ENCODE measurements at regions of chr2 and their contacts with region 1.

Region 1: GRCh38 chr2:187581125-187581896 is 27.1 kb upstream of the TFPI start:
- DNase-seq: peak; percentile 39
- H3K4me3 Mint-ChIP-seq: no peak overlapping the region
- H3K27ac Mint-ChIP-seq: no peak overlapping the region
- H3K4me1 Mint-ChIP-seq: peaks cover 6% of the 10 kb centered on the region
- H3K27me3 Mint-ChIP-seq: peaks cover 11% of the 10 kb centered on the region

Region 2: DNA sequence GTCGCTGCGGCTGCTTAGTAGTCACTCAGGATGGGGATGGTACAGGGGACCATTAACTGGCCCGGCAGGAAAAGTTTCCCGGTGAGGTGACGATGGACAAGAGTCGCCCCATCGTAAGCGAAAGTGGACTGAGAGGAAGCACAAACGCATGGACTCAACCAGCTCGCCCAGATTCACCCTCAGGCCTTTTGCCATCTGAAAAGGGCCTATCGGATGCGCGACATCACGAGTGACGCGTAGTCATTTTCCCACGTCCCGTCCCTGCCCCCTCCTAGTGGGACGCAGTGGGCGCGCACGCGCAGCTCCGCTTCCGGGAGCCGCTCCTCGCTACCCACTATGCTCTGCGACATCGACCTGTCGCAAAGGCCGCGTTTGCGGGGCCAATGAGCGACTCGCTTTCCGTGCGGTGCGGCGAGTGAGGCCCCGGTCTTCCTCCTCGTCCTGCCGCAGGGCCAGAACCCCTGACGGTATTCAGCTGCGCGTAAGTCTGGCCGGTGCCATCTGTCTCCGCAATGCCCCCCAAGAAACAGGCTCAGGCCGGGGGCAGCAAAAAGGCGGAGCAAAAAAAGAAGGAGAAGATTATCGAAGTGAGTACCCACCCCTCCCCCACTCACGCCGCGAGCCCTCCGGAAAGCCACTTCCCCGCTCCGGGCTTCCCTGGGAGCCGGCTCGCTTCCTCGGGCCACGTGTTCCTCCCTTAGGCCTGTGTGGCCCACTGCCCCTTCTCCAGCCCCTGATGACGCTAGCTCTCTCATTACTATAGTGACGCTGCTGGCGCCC is 1095.2 kb before region 1 on chr2 and contains the start of gene ZC3H15:
- CTCF ChIA-PET with region 1: no interaction called
- intact Hi-C with region 1: loop called (anchors 10 kb)
- DNase-seq: peak; percentile 96
- H3K4me3 Mint-ChIP-seq: peak within 1 kb of the TSS; percentile 98
- H3K27ac Mint-ChIP-seq: peak within 1 kb of the TSS; percentile 98
- H3K4me1 Mint-ChIP-seq: peaks cover 60% of the 10 kb centered on the region
- H3K27me3 Mint-ChIP-seq: no peaks in the 10 kb centered on the region
- total RNA-seq, gene ZC3H15: 92.2 to 93.3 TPM

Region 3: GRCh38 chr2:187453078-187453641 is 128.2 kb before region 1 on chr2:
- CTCF ChIA-PET with region 1: no interaction called
- intact Hi-C with region 1: loop called (anchors 1 kb)
- DNase-seq: no peak
- H3K4me3 Mint-ChIP-seq: no peak overlapping the region
- H3K27ac Mint-ChIP-seq: no peak overlapping the region
- H3K4me1 Mint-ChIP-seq: peaks cover 3% of the 10 kb centered on the region
- H3K27me3 Mint-ChIP-seq: no peaks in the 10 kb centered on the region

Region 4: DNA sequence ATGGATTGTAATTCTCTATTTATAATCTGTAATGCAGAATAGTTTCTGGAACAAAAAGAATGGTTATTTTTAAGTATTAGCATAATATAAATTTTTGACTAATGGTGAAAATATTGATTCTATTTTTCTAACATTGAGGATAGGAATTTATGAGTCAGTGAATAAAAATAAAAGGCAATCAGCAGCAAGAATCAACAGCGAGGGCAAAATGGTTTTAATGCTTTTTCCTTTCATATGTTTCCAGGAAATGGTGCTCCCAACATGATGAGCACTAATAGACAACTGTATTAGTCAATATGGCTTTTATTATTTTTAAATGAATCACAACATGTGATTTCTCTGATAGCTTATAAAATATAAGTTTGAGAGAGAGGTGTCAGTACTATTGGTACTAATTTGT is 63.7 kb after region 1 on chr2:
- CTCF ChIA-PET with region 1: no interaction called
- intact Hi-C with region 1: no loop called
- DNase-seq: no peak
- H3K4me3 Mint-ChIP-seq: no peak overlapping the region
- H3K27ac Mint-ChIP-seq: no peak overlapping the region
- H3K4me1 Mint-ChIP-seq: no peaks in the 10 kb centered on the region
- H3K27me3 Mint-ChIP-seq: no peaks in the 10 kb centered on the region

Region 5: GRCh38 chr2:187842978-187843847 is 261.9 kb after region 1 on chr2:
- CTCF ChIA-PET with region 1: interaction called, 7 read pairs
- intact Hi-C with region 1: loop called (anchors 1 kb)
- DNase-seq: no peak
- H3K4me3 Mint-ChIP-seq: no peak overlapping the region
- H3K27ac Mint-ChIP-seq: no peak overlapping the region
- H3K4me1 Mint-ChIP-seq: no peaks in the 10 kb centered on the region
- H3K27me3 Mint-ChIP-seq: no peaks in the 10 kb centered on the region

Region 6: DNA sequence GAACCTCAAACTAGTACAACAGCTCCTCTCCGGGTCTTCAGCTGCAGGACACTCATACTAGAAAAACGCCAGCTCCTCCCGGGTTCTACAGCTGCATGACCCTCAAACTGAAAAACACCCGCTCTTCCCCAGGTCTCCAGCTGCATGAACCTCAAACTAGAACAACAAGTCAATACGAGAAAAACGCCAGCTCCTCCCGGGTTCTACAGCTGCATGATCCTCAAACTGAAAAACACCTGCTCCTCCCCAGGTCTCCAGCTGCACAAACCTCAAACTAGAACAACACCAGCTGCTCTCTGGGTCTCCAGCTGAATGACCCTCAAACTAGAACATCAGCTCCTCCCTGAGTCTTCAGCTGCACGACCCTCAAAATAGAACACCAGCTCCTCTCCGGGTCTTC is 287.9 kb after region 1 on chr2:
- CTCF ChIA-PET with region 1: no interaction called
- intact Hi-C with region 1: no loop called
- DNase-seq: no peak
- H3K4me3 Mint-ChIP-seq: no peak overlapping the region
- H3K27ac Mint-ChIP-seq: no peak overlapping the region
- H3K4me1 Mint-ChIP-seq: no peaks in the 10 kb centered on the region
- H3K27me3 Mint-ChIP-seq: no peaks in the 10 kb centered on the region

Region 7: DNA sequence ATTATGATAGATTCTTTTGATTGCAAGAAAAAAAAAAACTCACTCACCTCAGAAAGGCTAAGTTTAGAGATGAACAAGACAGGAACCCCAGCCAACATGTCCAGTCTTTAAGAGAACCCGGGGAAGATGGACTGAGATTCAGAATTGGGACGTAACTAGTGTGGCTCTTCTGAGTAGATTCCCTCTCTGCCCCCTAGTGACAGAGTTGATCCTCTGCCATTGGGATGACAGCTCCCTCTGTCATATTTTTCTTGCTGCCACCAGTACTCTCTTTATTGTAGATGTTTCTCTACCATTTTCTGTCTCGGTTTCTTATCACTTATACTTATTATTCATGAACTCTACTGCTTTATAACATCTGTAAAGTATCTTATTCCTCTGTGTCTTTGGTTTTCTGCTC is 788.1 kb after region 1 on chr2:
- CTCF ChIA-PET with region 1: no interaction called
- intact Hi-C with region 1: loop called (anchors 1 kb)
- DNase-seq: peak; percentile 18
- H3K4me3 Mint-ChIP-seq: no peak overlapping the region
- H3K27ac Mint-ChIP-seq: no peak overlapping the region
- H3K4me1 Mint-ChIP-seq: no peaks in the 10 kb centered on the region
- H3K27me3 Mint-ChIP-seq: no peaks in the 10 kb centered on the region

Region 8: GRCh38 chr2:188978291-188979081 is 1397.2 kb after region 1 on chr2:
- CTCF ChIA-PET with region 1: no interaction called
- intact Hi-C with region 1: loop called (anchors 1 kb)
- DNase-seq: peak; percentile 6
- H3K4me3 Mint-ChIP-seq: peak overlapping the region; percentile 7
- H3K27ac Mint-ChIP-seq: peak overlapping the region; percentile 51
- H3K4me1 Mint-ChIP-seq: peaks cover 19% of the 10 kb centered on the region
- H3K27me3 Mint-ChIP-seq: peaks cover 19% of the 10 kb centered on the region